ENCODE measurements at regions of chr20 and their contacts with region 1.

Region 1: GRCh38 chr20:54199721-54200176 is 8.1 kb upstream of the PFDN4 start:
- DNase-seq: peak; percentile 72
- ATAC-seq: peak; percentile 53
- H3K4me3 ChIP-seq: no peak overlapping the region
- H3K4me3 Mint-ChIP-seq: no peak overlapping the region
- H3K27ac ChIP-seq: no peak overlapping the region
- H3K27ac Mint-ChIP-seq: no peak overlapping the region
- H3K4me1 ChIP-seq: peaks cover 0 to 8% of the 10 kb centered on the region in 2 donors
- H3K4me1 Mint-ChIP-seq: peaks cover 10% of the 10 kb centered on the region
- H3K27me3 ChIP-seq: no peaks in the 10 kb centered on the region
- H3K27me3 Mint-ChIP-seq: peaks cover 7% of the 10 kb centered on the region
- CTCF ChIP-seq: peak; percentile 99

Region 2: DNA sequence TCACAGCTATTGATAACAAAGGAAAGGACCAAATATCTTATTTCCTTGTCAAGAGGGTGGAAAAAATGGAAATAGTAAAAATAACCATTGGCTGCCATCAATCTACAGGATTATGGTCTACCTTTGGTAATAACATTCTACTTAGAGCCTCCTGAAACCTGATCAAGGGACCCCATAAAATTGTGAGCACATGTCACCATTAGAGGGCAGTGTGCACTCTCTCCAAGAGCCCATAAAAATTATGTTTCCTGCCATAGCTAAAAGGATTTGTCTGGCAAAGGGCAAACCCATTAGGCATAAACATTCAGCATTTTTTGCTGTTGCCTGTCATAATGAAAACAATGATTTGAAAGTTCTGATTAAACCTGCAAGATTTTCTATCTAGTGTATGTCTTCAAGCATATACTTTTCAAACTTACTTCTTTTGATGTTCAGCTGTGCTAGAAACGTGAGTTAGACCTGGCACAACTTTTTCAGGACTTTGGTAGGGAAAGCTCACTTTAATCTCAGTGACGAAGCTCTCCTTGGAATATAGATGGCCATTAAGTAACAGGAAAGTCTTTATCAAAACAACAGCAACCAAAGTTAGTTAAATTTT is 1887.5 kb before region 1 on chr20:
- CTCF ChIA-PET with region 1: interaction called, 55 read pairs
- POLR2A ChIA-PET with region 1: no interaction called
- intact Hi-C with region 1: no loop called
- DNase-seq: peak; percentile 60
- ATAC-seq: no peak
- H3K4me3 ChIP-seq: no peak overlapping the region
- H3K4me3 Mint-ChIP-seq: no peak overlapping the region
- H3K27ac ChIP-seq: no peak overlapping the region
- H3K27ac Mint-ChIP-seq: no peak overlapping the region
- H3K4me1 ChIP-seq: no peaks in the 10 kb centered on the region
- H3K4me1 Mint-ChIP-seq: no peaks in the 10 kb centered on the region
- H3K27me3 ChIP-seq: no peaks in the 10 kb centered on the region
- H3K27me3 Mint-ChIP-seq: peaks cover 35% of the 10 kb centered on the region
- CTCF ChIP-seq: peak; percentile 81

Region 3: DNA sequence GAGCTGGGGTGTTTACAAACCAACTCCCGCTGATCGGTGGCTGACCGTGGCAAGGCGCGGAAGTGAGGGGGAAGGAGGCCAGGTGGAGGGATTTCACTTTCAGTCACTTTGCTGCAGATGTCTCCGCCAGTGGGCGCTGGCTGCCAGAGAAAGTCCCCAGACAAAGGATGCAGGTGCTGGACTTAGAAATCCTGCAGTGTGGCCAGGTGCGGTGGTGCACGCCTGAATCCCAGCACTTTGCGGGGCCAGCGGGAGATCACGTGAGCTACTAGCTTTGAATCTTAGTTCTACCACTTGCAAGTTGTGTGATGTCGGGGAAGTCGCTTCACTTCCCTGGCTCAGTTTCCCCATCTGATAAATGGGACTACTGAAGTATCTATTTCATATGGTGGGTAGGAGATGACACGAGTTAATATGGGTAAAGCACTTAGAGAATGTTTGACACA is 786.5 kb before region 1 on chr20:
- CTCF ChIA-PET with region 1: interaction called, 6 read pairs
- POLR2A ChIA-PET with region 1: no interaction called
- intact Hi-C with region 1: loop called (anchors 1 kb)
- DNase-seq: peak; percentile 72
- ATAC-seq: peak; percentile 56
- H3K4me3 ChIP-seq: peak overlapping the region in 1 of 5 experiments; percentile 10
- H3K4me3 Mint-ChIP-seq: peak overlapping the region; percentile 56
- H3K27ac ChIP-seq: no peak overlapping the region
- H3K27ac Mint-ChIP-seq: peak overlapping the region; percentile 0
- H3K4me1 ChIP-seq: peaks cover 0 to 8% of the 10 kb centered on the region in 2 donors
- H3K4me1 Mint-ChIP-seq: peaks cover 5% of the 10 kb centered on the region
- H3K27me3 ChIP-seq: peaks cover 0 to 4% (median 0%) of the 10 kb centered on the region in 4 experiments
- H3K27me3 Mint-ChIP-seq: no peaks in the 10 kb centered on the region
- CTCF ChIP-seq: peak; percentile 62

Region 4: GRCh38 chr20:54044156-54044555 is 155.6 kb before region 1 on chr20:
- CTCF ChIA-PET with region 1: no interaction called
- POLR2A ChIA-PET with region 1: no interaction called
- intact Hi-C with region 1: no loop called
- DNase-seq: no peak
- ATAC-seq: no peak
- H3K4me3 ChIP-seq: no peak overlapping the region
- H3K4me3 Mint-ChIP-seq: no peak overlapping the region
- H3K27ac ChIP-seq: no peak overlapping the region
- H3K27ac Mint-ChIP-seq: no peak overlapping the region
- H3K4me1 ChIP-seq: no peaks in the 10 kb centered on the region
- H3K4me1 Mint-ChIP-seq: peaks cover 8% of the 10 kb centered on the region
- H3K27me3 ChIP-seq: peaks cover 0 to 4% (median 0%) of the 10 kb centered on the region in 4 experiments
- H3K27me3 Mint-ChIP-seq: peaks cover 3% of the 10 kb centered on the region
- CTCF ChIP-seq: no peak

Region 5: DNA sequence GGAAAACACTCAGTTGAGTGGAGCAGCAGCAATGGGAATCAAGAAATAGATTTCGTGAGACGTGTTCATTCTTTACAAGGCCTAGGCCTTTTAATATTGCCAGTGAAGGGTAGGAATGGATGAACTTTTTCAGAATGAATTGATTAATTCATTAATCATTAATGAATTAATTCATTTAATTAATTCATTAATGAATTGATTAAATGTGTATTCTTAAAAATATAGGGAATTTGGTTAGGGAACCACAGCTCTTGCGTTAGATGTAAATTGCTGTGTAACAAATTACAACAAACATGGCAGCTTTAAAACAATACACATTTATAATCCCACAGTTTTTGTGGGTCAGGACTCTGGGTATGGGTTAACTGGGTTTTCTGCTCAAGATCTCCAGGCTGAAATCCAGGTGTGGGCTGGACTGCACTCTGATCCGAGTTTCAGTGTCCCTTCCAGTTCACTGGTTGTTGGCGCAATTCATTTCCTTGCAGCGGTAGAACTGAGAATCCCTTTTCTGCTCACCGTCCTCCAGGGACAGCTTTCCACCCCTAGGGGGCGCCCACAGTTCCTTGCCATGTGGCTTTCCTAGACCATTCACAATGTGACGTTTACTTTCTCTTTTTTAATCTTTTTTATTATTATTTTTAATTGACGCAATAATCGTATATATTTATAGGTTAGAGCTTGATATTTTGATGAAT is 96.5 kb before region 1 on chr20:
- CTCF ChIA-PET with region 1: interaction called, 20 read pairs
- POLR2A ChIA-PET with region 1: no interaction called
- intact Hi-C with region 1: loop called (anchors 1 kb)
- DNase-seq: peak; percentile 57
- ATAC-seq: peak; percentile 54
- H3K4me3 ChIP-seq: no peak overlapping the region
- H3K4me3 Mint-ChIP-seq: no peak overlapping the region
- H3K27ac ChIP-seq: no peak overlapping the region
- H3K27ac Mint-ChIP-seq: no peak overlapping the region
- H3K4me1 ChIP-seq: no peaks in the 10 kb centered on the region
- H3K4me1 Mint-ChIP-seq: peaks cover 1% of the 10 kb centered on the region
- H3K27me3 ChIP-seq: peaks cover 0 to 6% (median under 1%) of the 10 kb centered on the region in 4 experiments
- H3K27me3 Mint-ChIP-seq: peaks cover 25% of the 10 kb centered on the region
- CTCF ChIP-seq: peak; percentile 81

Region 6: GRCh38 chr20:54122189-54122588 is 77.6 kb before region 1 on chr20:
- CTCF ChIA-PET with region 1: no interaction called
- POLR2A ChIA-PET with region 1: no interaction called
- intact Hi-C with region 1: no loop called
- DNase-seq: no peak
- ATAC-seq: no peak
- H3K4me3 ChIP-seq: no peak overlapping the region
- H3K4me3 Mint-ChIP-seq: no peak overlapping the region
- H3K27ac ChIP-seq: no peak overlapping the region
- H3K27ac Mint-ChIP-seq: no peak overlapping the region
- H3K4me1 ChIP-seq: no peaks in the 10 kb centered on the region
- H3K4me1 Mint-ChIP-seq: peaks cover 3% of the 10 kb centered on the region
- H3K27me3 ChIP-seq: no peaks in the 10 kb centered on the region
- H3K27me3 Mint-ChIP-seq: no peaks in the 10 kb centered on the region
- CTCF ChIP-seq: no peak

Region 7: DNA sequence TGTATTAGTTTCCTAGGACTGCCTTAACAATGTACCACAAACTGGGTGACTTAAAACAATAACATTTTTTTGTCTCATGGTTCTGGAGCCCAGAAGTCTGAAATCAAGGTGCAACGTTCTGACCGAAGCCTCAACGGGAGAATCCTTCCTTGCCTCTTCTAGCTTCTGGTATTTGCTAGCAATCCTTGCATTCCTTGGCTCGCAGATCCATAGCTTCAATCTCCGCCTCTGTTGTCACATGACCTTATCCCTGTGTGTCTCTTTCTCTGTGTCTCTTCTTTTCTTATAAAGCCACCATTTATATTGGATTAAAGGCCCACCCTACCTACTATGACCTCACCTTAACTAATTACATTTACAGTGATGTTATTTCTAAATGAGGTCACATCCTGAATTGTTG is 238.4 kb after region 1 on chr20:
- CTCF ChIA-PET with region 1: no interaction called
- POLR2A ChIA-PET with region 1: no interaction called
- intact Hi-C with region 1: no loop called
- DNase-seq: no peak
- ATAC-seq: no peak
- H3K4me3 ChIP-seq: no peak overlapping the region
- H3K4me3 Mint-ChIP-seq: no peak overlapping the region
- H3K27ac ChIP-seq: no peak overlapping the region
- H3K27ac Mint-ChIP-seq: no peak overlapping the region
- H3K4me1 ChIP-seq: no peaks in the 10 kb centered on the region
- H3K4me1 Mint-ChIP-seq: no peaks in the 10 kb centered on the region
- H3K27me3 ChIP-seq: no peaks in the 10 kb centered on the region
- H3K27me3 Mint-ChIP-seq: peaks cover 3% of the 10 kb centered on the region
- CTCF ChIP-seq: no peak

Region 8: GRCh38 chr20:54649511-54649962 is 449.8 kb after region 1 on chr20:
- CTCF ChIA-PET with region 1: interaction called, 6 read pairs
- POLR2A ChIA-PET with region 1: no interaction called
- intact Hi-C with region 1: loop called (anchors 5 kb)
- DNase-seq: peak; percentile 61
- ATAC-seq: no peak
- H3K4me3 ChIP-seq: no peak overlapping the region
- H3K4me3 Mint-ChIP-seq: no peak overlapping the region
- H3K27ac ChIP-seq: no peak overlapping the region
- H3K27ac Mint-ChIP-seq: no peak overlapping the region
- H3K4me1 ChIP-seq: no peaks in the 10 kb centered on the region
- H3K4me1 Mint-ChIP-seq: no peaks in the 10 kb centered on the region
- H3K27me3 ChIP-seq: no peaks in the 10 kb centered on the region
- H3K27me3 Mint-ChIP-seq: peaks cover 12% of the 10 kb centered on the region
- CTCF ChIP-seq: peak; percentile 89